HEK293 (cell line): ENCODE measurements at regions of chr16 and their contacts with region 1.

Region 1: GRCh38 chr16:15888072-15888976 is at the start of gene CEP20:
- H3K4me3 ChIP-seq: peak within 1 kb of the TSS; percentile 62
- H3K27ac ChIP-seq: peak within 1 kb of the TSS; percentile 79
- H3K4me1 ChIP-seq: peaks cover 2% of the 10 kb centered on the region
- CTCF ChIP-seq: peak; percentile 31; the same call in 1 of the 2 replicates

Region 2: DNA sequence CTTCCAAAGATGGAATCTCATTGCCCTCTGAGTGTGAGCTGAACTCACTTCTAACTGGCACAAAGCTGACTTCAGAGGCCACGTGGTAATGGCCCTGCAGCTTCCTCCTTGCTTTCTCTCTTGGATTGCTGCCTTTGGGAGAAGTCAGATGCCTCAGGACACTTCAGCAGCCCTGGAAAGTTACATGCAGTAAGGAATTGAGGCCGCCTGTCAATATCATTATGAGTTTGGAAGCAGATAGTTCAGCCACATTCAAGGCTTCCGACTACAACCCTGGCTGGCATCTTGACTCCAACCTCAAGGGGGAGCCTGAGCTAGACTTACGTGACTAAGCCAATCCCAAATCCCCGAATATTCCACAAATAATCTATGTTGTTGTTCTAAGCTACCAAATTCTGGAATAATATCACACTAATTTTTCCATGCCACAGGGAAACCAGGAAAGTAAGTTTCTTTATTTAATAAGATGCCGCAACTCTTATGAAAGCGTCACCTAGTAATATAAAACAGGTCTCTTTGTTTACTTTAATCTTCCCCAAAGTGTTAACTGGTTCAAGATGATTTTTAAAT is 13.5 kb before region 1 on chr16:
- CTCF ChIA-PET with region 1: interaction called, 37 read pairs
- POLR2A ChIA-PET with region 1: interaction called, 5 read pairs
- H3K4me3 ChIP-seq: no peak overlapping the region
- H3K27ac ChIP-seq: no peak overlapping the region
- H3K4me1 ChIP-seq: no peaks in the 10 kb centered on the region
- CTCF ChIP-seq: peak; percentile 29; the same call in 1 of the 2 replicates

Region 3: DNA sequence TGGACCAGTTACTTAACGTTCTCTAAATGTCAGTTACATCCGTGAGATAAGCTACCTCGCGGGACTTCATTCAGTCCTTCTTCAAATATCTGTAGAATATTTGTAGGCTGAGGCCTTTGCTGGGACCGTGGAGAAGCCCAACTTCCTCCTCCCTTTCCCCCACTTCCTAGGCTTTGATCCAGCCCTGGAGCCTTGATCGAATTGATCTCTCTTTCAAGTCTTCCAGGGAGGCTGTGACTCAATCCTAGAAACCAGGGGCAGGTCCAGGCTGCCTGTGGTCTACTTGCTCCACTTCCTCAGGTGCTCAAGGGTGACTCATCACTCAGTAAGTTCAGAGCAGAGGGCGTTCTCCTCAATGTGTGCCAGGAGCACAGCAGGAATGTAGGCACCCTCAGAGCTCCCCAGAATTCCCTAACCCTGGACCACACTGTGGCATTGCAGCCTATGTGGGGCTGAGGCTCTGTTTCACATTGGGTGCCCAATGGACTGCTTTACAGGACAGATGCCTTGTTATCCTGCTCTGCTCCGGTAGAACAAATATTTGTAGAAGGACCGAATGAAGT is 11.3 kb after region 1 on chr16:
- CTCF ChIA-PET with region 1: no interaction called
- POLR2A ChIA-PET with region 1: interaction called, 18 read pairs
- H3K4me3 ChIP-seq: no peak overlapping the region
- H3K27ac ChIP-seq: no peak overlapping the region
- H3K4me1 ChIP-seq: 0 out of 2 replicates have a peak, but pooled peaks cover 2% of the 10 kb centered on the region
- CTCF ChIP-seq: no peak